A549 (cell line): ENCODE measurements at regions of chr17 and their contacts with region 1.

Region 1: DNA sequence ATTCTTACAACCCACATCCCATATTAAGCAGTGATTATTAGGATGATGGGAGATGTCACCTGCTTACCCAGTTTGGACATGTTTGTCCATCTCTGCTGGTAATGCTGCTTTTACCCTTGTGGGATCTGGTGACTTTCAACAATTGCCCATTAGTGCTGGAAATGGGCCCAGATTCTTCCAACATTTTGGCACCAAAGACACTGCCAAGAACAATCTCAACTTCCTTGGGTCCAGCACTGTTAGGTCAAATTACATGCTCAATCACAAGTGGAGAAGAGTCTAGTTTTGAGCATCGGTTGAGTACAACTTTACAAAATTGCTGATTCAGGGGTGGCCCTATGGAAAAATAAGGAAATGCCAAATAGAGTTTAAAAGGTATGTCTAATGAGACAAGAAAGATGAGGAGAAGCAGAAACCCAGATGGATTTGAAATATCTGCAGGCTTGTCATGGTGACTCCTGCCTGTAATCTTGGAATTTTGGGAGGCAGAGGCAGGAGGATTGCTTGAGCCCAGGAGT is 13.0 kb upstream of the ZFP3 start:
- DNase-seq: no peak
- ATAC-seq: no peak
- H3K4me3 ChIP-seq: no peak overlapping the region
- H3K27ac ChIP-seq: no peak overlapping the region
- H3K4me1 ChIP-seq: no peaks in the 10 kb centered on the region
- CTCF ChIP-seq: no peak
- EP300 ChIP-seq: no peak
- POLR2A ChIP-seq: no peak
- RAD21 ChIP-seq: no peak

Region 2: GRCh38 chr17:4913994-4914393 is 151.3 kb before region 1 on chr17:
- CTCF ChIA-PET with region 1: interaction called, 42 read pairs
- POLR2A ChIA-PET with region 1: no interaction called
- DNase-seq: no peak
- ATAC-seq: no peak
- H3K4me3 ChIP-seq: no peak overlapping the region
- H3K27ac ChIP-seq: no peak overlapping the region
- H3K4me1 ChIP-seq: peaks cover 9% of the 10 kb centered on the region; the same call in 2 of the 3 replicates
- CTCF ChIP-seq: no peak
- EP300 ChIP-seq: no peak
- POLR2A ChIP-seq: no peak
- RAD21 ChIP-seq: no peak

Region 3: GRCh38 chr17:4974115-4974670 is 91.1 kb before region 1 on chr17:
- CTCF ChIA-PET with region 1: interaction called, 69 read pairs
- POLR2A ChIA-PET with region 1: no interaction called
- DNase-seq: no peak
- ATAC-seq: no peak
- H3K4me3 ChIP-seq: no peak overlapping the region
- H3K27ac ChIP-seq: no peak overlapping the region
- H3K4me1 ChIP-seq: peaks cover 7% of the 10 kb centered on the region
- CTCF ChIP-seq: no peak
- EP300 ChIP-seq: no peak
- POLR2A ChIP-seq: no peak
- RAD21 ChIP-seq: no peak

Region 4: DNA sequence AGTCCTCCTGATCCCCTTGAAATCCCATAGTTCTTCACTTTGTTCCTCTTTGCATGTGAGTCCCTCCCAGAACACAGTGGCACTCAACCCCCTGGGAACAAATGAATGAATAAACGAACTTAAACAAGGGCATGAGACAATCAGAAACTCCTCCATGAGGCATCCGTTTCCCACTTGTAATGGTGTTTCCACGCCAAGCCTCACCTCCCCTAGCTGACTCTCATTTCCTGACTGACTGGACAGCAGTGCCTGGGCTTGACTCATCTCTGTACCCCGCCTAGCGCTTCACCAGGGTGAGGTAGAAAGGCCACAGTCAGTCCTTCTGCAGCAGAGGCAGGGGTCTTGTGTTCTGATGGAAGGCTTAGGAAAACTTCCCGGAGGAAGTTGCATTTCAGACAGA is 53.4 kb before region 1 on chr17:
- CTCF ChIA-PET with region 1: interaction called, 11 read pairs
- POLR2A ChIA-PET with region 1: no interaction called
- DNase-seq: no peak
- ATAC-seq: no peak
- H3K4me3 ChIP-seq: no peak overlapping the region
- H3K27ac ChIP-seq: no peak overlapping the region
- H3K4me1 ChIP-seq: no peaks in the 10 kb centered on the region
- CTCF ChIP-seq: no peak
- EP300 ChIP-seq: no peak
- POLR2A ChIP-seq: no peak
- RAD21 ChIP-seq: no peak

Region 5: DNA sequence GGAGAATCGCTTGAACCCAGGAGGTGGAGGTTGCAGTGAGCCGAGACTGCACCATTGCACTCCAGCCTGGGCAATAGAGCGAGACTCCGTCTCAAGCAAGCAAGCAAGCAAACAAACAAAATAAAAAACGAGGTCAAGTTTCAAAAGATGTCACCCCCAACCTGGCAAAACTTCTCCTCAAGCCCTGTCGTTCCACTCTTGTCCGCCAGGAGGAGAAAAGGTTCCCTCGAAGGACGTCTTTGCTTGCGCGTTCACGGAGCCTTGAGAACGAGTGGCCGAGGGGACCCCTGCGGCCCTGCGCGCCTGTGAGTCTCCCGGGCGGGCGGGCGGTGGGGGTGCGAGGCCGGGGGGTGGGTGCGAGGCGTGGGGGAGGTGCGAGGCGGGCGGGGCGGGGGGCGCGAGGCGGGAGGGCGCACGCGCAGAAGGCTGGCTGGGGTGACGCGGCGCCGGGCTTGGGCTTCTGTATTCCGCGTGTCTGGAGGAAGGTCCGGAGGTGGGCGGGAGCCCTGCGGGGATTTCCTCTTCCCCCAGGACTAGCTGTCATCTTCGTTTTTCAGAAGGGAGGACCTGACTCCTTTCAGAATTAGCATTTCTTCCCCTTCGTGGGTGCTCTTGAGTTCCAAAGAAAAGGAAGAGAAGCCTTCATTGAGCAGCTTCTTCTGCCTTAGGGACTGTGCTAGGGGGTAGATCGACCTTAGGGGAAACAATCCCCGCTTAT is 33.8 kb before region 1 on chr17:
- CTCF ChIA-PET with region 1: interaction called, 58 read pairs
- POLR2A ChIA-PET with region 1: no interaction called
- DNase-seq: peak; percentile 86
- ATAC-seq: peak; percentile 76 to 79
- H3K4me3 ChIP-seq: peak overlapping the region; percentile 42
- H3K27ac ChIP-seq: peak overlapping the region; percentile 70 to 90
- H3K4me1 ChIP-seq: peaks cover 3% of the 10 kb centered on the region; the same call in 1 of the 3 replicates
- CTCF ChIP-seq: peak; percentile 65
- EP300 ChIP-seq: no peak
- POLR2A ChIP-seq: 0 out of 2 replicates have a peak, but pooled peaks have one; percentile 10
- RAD21 ChIP-seq: peak; percentile 47 to 55; a peak in 4 of 5 replicates